Naive thymus-derived CD4-positive, alpha-beta T cell (primary cell): ENCODE measurements at regions of chr7 and their contacts with region 1.

Region 1: GRCh38 chr7:110839866-110840265 is 251.1 kb upstream of the LRRN3 start:
- DNase-seq: no peak
- ATAC-seq: no peak
- H3K4me3 ChIP-seq: no peak overlapping the region
- H3K4me3 Mint-ChIP-seq: no peak overlapping the region
- H3K27ac ChIP-seq: no peak overlapping the region
- H3K27ac Mint-ChIP-seq: no peak overlapping the region
- H3K4me1 ChIP-seq: peaks cover 0 to 6% of the 10 kb centered on the region in 2 donors
- H3K4me1 Mint-ChIP-seq: peaks cover 9 to 17% (median 17%) of the 10 kb centered on the region in 7 donors
- H3K27me3 ChIP-seq: no peaks in the 10 kb centered on the region
- H3K27me3 Mint-ChIP-seq: no peaks in the 10 kb centered on the region

Region 2: DNA sequence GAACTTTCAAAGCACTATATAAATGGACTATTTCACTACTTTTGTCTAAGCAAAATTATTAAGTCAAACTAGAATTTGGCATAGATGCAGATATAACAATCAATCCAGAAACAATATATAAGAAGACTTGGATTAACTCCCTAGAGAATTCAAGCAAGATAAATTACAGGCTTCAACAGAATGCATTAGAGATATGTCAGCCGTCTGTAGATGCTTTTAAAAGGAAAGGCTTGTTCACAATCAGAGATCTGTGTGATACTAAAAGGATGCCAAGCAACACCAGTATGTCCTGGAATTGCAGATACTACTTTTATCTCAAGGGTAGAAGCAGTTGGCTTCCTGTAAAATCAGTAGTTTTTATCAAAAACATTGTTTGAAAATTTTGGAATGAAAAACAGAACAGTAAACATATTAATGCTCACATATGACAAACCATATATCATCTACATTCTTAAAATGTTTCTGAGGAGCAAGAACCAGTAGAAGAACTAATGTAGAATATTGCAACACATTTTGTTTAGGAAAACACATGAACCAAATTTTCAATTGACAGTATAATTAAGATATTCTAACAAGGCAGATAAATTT is 696.8 kb before region 1 on chr7:
- CTCF ChIA-PET with region 1: no interaction called
- POLR2A ChIA-PET with region 1: no interaction called
- intact Hi-C with region 1: no loop called
- DNase-seq: no peak
- ATAC-seq: no peak
- H3K4me3 ChIP-seq: no peak overlapping the region
- H3K4me3 Mint-ChIP-seq: no peak overlapping the region
- H3K27ac ChIP-seq: no peak overlapping the region
- H3K27ac Mint-ChIP-seq: no peak overlapping the region
- H3K4me1 ChIP-seq: no peaks in the 10 kb centered on the region
- H3K4me1 Mint-ChIP-seq: no peaks in the 10 kb centered on the region
- H3K27me3 ChIP-seq: no peaks in the 10 kb centered on the region
- H3K27me3 Mint-ChIP-seq: peaks cover 0 to 18% (median 0%) of the 10 kb centered on the region in 5 donors

Region 3: DNA sequence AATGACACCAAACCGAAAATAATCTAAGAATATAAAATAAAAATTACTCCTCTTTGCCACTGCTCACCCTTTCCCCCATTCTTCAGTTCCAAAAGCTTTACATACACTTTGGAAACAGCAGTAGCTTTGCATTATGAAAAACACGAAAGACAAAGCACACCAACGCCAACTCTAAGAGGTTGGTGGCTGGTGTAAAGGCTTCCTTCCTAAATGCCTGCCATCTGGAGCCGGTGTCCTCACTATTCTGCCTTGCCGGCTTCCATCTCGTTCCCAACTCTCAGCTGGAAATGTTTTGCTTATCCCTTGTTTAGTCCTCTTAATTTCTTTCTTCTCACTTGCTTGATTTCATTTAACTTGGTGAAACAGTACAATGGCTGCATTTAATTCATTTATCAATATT is 30.0 kb before region 1 on chr7:
- CTCF ChIA-PET with region 1: no interaction called
- POLR2A ChIA-PET with region 1: no interaction called
- intact Hi-C with region 1: loop called in 1 of 2 experiments (anchors 5 kb)
- DNase-seq: no peak
- ATAC-seq: no peak
- H3K4me3 ChIP-seq: no peak overlapping the region
- H3K4me3 Mint-ChIP-seq: no peak overlapping the region
- H3K27ac ChIP-seq: no peak overlapping the region
- H3K27ac Mint-ChIP-seq: no peak overlapping the region
- H3K4me1 ChIP-seq: no peaks in the 10 kb centered on the region
- H3K4me1 Mint-ChIP-seq: peaks cover 0 to 5% (median 0%) of the 10 kb centered on the region in 7 donors
- H3K27me3 ChIP-seq: no peaks in the 10 kb centered on the region
- H3K27me3 Mint-ChIP-seq: no peaks in the 10 kb centered on the region

Region 4: GRCh38 chr7:110827936-110828335 is 11.9 kb before region 1 on chr7:
- CTCF ChIA-PET with region 1: no interaction called
- POLR2A ChIA-PET with region 1: interaction called, 3 read pairs
- intact Hi-C with region 1: loop called in 1 of 2 experiments (anchors 2 kb)
- DNase-seq: no peak
- ATAC-seq: no peak
- H3K4me3 ChIP-seq: no peak overlapping the region
- H3K4me3 Mint-ChIP-seq: no peak overlapping the region
- H3K27ac ChIP-seq: no peak overlapping the region
- H3K27ac Mint-ChIP-seq: no peak overlapping the region
- H3K4me1 ChIP-seq: no peaks in the 10 kb centered on the region
- H3K4me1 Mint-ChIP-seq: peaks cover 0 to 6% (median 0%) of the 10 kb centered on the region in 7 donors
- H3K27me3 ChIP-seq: no peaks in the 10 kb centered on the region
- H3K27me3 Mint-ChIP-seq: no peaks in the 10 kb centered on the region